Mammary epithelial cell (primary cell): ENCODE measurements at regions of chr17 and their contacts with region 1.

Region 1: DNA sequence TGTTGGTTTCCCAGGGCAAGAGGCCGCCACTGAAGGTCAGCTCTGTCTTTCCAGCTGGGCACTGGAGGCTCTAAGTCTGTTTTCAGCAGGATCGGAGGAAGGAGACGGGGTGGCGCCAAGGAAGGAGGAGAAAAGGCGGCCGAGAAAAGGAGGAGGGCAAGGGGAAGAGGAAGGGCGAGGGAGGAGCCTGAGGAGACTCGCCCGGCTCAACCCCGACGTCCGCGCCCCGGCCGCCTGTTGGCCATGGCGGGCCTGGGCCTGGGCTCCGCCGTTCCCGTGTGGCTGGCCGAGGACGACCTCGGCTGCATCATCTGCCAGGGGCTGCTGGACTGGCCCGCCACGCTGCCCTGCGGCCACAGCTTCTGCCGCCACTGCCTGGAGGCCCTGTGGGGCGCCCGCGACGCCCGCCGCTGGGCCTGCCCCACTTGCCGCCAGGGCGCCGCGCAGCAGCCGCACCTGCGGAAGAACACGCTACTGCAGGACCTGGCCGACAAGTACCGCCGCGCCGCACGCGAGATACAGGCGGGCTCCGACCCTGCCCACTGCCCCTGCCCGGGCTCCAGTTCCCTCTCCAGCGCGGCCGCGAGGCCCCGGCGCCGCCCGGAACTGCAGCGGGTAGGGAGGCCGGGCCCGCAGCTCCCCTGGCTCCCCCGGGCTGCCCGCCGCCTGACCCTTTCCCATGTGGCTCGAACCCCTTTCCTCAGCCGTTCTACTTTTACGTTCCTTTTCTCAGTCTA is at the start of gene RNF135:
- DNase-seq: peak; percentile 88
- H3K4me3 ChIP-seq: peak within 1 kb of the TSS; percentile 62 to 83 (median 66)
- H3K27ac ChIP-seq: peak within 1 kb of the TSS; percentile 92
- H3K4me1 ChIP-seq: peaks cover 6% of the 10 kb centered on the region
- H3K27me3 ChIP-seq: no peaks in the 10 kb centered on the region
- CTCF ChIP-seq: peak in 1 of 2 donors; percentile 17
- total RNA-seq, gene RNF135: 13.3 to 13.7 TPM

Region 2: GRCh38 chr17:30093463-30094147 is 877.4 kb before region 1 on chr17:
- CTCF ChIA-PET with region 1: no interaction called
- dilution Hi-C with region 1: no loop called
- in situ Hi-C with region 1: no loop called
- intact Hi-C with region 1: no loop called
- DNase-seq: peak; percentile 43
- H3K4me3 ChIP-seq: no peak overlapping the region
- H3K27ac ChIP-seq: no peak overlapping the region
- H3K4me1 ChIP-seq: no peaks in the 10 kb centered on the region
- H3K27me3 ChIP-seq: no peaks in the 10 kb centered on the region
- CTCF ChIP-seq: peak; percentile 62 to 70

Region 3: DNA sequence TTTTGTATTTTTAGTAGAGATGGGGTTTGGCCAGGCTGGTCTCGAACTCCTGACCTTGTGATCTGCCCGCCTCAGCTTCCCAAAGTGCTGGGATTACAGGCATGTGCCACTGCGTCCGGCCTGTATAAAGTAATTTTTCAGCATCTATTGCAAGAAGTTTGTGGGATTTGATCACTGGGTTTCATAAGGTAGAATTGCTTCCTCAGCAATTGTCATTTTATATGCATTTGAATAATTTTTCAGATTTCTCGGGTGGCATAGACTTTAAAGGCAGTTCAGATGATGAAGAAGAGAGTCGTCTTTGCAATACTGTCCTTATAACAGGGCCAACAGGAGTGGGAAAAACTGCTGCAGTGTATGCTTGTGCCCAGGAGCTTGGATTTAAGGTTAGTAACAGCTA is 102.0 kb before region 1 on chr17:
- CTCF ChIA-PET with region 1: no interaction called
- dilution Hi-C with region 1: no loop called
- in situ Hi-C with region 1: no loop called
- intact Hi-C with region 1: no loop called
- DNase-seq: no peak
- H3K4me3 ChIP-seq: no peak overlapping the region
- H3K27ac ChIP-seq: no peak overlapping the region
- H3K4me1 ChIP-seq: no peaks in the 10 kb centered on the region
- H3K27me3 ChIP-seq: no peaks in the 10 kb centered on the region
- CTCF ChIP-seq: no peak

Region 4: DNA sequence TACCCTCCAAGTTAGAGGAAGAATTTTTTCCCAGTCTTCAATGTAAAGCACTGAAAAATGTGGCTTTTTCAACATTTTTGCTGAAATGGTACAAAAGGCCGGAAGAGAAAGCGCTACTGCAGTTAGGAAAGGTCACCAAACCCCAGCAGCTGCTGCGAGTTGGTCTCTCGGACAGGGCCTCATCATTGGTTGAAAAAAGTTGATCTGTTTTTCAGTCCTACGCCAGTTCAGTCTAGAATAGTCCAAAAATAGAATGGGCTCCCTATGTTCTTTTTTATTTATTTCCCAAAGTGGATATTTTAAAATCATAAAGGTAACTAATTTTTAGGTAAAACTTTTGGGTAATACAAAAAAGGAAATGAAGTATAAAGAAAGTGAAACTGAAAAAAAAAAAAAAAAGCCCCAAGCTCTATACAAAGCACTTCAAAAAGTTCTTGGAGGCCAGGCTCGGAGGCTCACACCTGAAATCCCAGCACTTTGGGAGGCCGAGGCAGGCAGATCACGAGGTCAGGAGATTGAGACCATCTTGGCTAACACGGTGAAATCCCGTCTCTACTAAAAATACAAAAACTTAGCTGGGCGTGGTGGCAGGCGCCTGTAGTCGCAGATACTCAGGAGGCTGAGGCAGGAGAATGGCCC is 31.8 kb before region 1 on chr17:
- CTCF ChIA-PET with region 1: no interaction called
- dilution Hi-C with region 1: no loop called
- in situ Hi-C with region 1: no loop called
- intact Hi-C with region 1: no loop called
- DNase-seq: no peak
- H3K4me3 ChIP-seq: no peak overlapping the region
- H3K27ac ChIP-seq: no peak overlapping the region
- H3K4me1 ChIP-seq: no peaks in the 10 kb centered on the region
- H3K27me3 ChIP-seq: no peaks in the 10 kb centered on the region
- CTCF ChIP-seq: no peak

Region 5: DNA sequence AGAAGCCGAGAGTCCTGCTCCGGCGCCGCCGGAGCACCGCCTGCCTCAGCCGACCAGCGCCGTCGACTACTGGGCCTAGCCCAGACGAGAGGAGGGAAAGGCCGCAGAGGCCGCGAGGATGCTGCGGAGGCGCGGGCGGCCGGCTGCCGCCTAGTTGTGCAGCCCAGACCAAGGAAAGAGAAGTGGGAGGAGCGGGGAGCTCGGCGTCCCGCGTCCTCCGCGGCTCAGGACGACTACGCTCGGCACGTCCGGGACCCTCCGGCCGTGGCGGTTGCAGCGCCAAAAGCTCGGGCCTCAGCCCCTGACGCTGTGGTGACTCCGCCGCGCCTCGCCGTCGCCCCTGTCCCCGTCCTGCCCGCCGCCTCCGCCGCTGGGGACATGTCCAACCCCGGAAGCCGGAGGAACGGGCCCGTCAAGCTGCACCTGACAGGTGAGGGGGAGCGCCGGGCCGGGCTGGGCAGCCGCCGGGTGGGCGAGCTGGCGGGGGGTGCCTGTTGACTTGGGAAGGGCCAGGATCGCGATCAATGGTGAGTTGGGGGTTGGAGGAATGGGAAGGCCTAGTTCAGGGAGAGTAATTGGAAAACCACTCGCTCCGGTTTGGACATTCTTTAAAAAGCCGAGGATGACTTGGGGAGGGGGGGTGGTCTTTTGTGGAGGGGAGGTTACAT is 37.5 kb after region 1 on chr17:
- CTCF ChIA-PET with region 1: interaction called, 8 read pairs
- dilution Hi-C with region 1: no loop called
- in situ Hi-C with region 1: no loop called
- intact Hi-C with region 1: loop called (anchors 2 kb)
- DNase-seq: peak; percentile 72
- H3K4me3 ChIP-seq: peak overlapping the region; percentile 59 to 67 (median 60)
- H3K27ac ChIP-seq: peak overlapping the region; percentile 27
- H3K4me1 ChIP-seq: peaks cover 8% of the 10 kb centered on the region
- H3K27me3 ChIP-seq: no peaks in the 10 kb centered on the region
- CTCF ChIP-seq: peak in 1 of 2 donors; percentile 10